Activated B cell treated with CpG ODN at 0.5 μM for 24 hours (primary cell): ENCODE measurements at regions of chr14 and their contacts with region 1.

Region 1: DNA sequence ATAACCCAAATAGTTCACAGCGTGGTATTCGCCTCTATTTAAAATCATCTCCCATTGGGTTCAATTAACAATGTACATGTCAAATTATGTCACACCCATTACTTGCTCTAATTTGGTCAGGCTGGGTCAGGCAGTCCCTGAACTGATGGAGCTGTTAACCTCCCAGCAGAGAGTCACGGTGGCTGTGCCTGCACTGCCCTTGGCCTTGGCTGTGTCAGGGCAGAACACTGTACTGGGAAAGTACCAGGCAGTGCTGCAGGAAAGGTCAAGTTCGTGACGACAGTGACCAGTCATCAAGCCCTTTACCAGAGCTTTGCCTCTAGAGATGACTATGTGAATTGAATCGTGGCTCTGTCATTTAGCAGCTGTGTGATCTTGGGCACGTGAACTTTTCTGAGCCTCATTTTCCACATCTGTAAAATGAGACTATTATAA is 100.0 kb downstream of the ARF6 start:
- DNase-seq: no peak
- ATAC-seq: peak; percentile 88
- H3K4me3 Mint-ChIP-seq: peak overlapping the region; percentile 73
- H3K27ac Mint-ChIP-seq: peak overlapping the region; percentile 90
- H3K4me1 Mint-ChIP-seq: peaks cover 36% of the 10 kb centered on the region
- H3K27me3 Mint-ChIP-seq: no peaks in the 10 kb centered on the region
- CTCF ChIP-seq: no peak

Region 2: GRCh38 chr14:49977126-49977841 is 15.6 kb before region 1 on chr14:
- CTCF ChIA-PET with region 1: interaction called, 3 read pairs
- POLR2A ChIA-PET with region 1: interaction called, 45 read pairs
- intact Hi-C with region 1: loop called (anchors 1 kb)
- DNase-seq: no peak
- ATAC-seq: peak; percentile 87
- H3K4me3 Mint-ChIP-seq: peak overlapping the region; percentile 76
- H3K27ac Mint-ChIP-seq: peak overlapping the region; percentile 95
- H3K4me1 Mint-ChIP-seq: peaks cover 88% of the 10 kb centered on the region
- H3K27me3 Mint-ChIP-seq: no peaks in the 10 kb centered on the region
- CTCF ChIP-seq: no peak